IMR-90 (cell line): ENCODE measurements at regions of chr4 and their contacts with region 1.

Region 1: GRCh38 chr4:7987148-7987989 is 47.7 kb upstream of the AFAP1 start:
- DNase-seq: peak; percentile 77
- ATAC-seq: peak; percentile 87
- H3K4me3 ChIP-seq: no peak overlapping the region
- H3K27ac ChIP-seq: no peak overlapping the region
- H3K4me1 ChIP-seq: peaks cover 12% of the 10 kb centered on the region
- H3K27me3 ChIP-seq: peaks cover 5% of the 10 kb centered on the region; the same call in 1 of the 2 replicates
- CTCF ChIP-seq: peak; percentile 95
- POLR2A ChIP-seq: 0 out of 2 replicates have a peak, but pooled peaks have one; percentile 38
- RAD21 ChIP-seq: peak; percentile 97

Region 2: GRCh38 chr4:7192252-7193029 is 794.9 kb before region 1 on chr4 and contains the start of gene SORCS2:
- CTCF ChIA-PET with region 1: no interaction called
- POLR2A ChIA-PET with region 1: no interaction called
- dilution Hi-C with region 1: no loop called
- in situ Hi-C with region 1: no loop called
- intact Hi-C with region 1: loop called (anchors 10 kb)
- DNase-seq: peak; percentile 39
- ATAC-seq: peak; percentile 96
- H3K4me3 ChIP-seq: peak within 1 kb of the TSS; percentile 43
- H3K27ac ChIP-seq: no peak within 1 kb of the TSS
- H3K4me1 ChIP-seq: peaks cover 5% of the 10 kb centered on the region; the same call in 1 of the 2 replicates
- H3K27me3 ChIP-seq: peaks cover 85% of the 10 kb centered on the region
- CTCF ChIP-seq: peak; percentile 85
- POLR2A ChIP-seq: no peak
- RAD21 ChIP-seq: peak; percentile 88
- total RNA-seq, gene SORCS2: 0.28 and 0.36 TPM in 2 replicates

Region 3: DNA sequence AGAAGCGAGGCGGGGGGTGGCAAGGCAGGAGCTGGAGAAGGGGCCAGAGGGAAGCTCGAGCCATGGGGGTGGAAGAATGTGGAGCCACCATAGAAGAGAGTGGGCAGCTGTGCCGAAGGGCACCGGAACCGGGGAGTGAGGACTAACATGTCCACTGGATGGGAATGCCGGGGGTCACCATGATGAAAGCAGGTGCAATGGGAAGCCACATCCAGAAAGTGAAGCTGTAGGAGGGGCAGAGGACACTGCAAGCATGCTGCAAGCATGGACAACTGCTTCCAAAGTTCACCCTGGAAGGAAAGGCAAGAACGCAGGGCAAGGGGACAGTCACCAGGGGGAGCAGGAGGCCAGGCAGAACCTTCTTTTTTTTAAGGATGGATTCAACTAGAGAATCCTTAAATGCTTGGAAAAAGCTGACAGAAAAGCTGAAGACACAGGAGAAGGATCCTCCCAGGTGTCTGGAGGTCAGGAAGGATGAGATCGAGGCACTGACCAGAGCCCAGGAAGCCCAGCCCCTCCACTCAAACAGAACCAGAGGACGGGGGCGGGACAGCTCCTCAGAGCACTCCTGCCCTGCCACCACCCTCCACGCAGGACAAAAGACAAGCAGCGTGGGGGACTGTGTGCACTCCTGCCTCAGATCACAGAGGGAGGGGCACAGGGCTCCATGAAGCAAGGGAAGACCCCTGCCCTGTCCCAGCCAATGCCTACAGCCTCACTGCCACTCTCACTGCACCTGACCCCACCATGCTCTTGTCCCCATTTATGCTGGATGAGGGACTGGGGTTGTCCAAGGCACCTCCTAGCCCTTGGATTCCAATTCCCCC is 216.9 kb before region 1 on chr4:
- CTCF ChIA-PET with region 1: interaction called, 3 read pairs
- POLR2A ChIA-PET with region 1: no interaction called
- dilution Hi-C with region 1: no loop called
- in situ Hi-C with region 1: loop called (anchors 10 kb)
- intact Hi-C with region 1: loop called (anchors 2 kb)
- DNase-seq: peak; percentile 25
- ATAC-seq: peak; percentile 36
- H3K4me3 ChIP-seq: no peak overlapping the region
- H3K27ac ChIP-seq: no peak overlapping the region
- H3K4me1 ChIP-seq: no peaks in the 10 kb centered on the region
- H3K27me3 ChIP-seq: no peaks in the 10 kb centered on the region
- CTCF ChIP-seq: peak; percentile 48
- POLR2A ChIP-seq: no peak
- RAD21 ChIP-seq: peak; percentile 40

Region 4: DNA sequence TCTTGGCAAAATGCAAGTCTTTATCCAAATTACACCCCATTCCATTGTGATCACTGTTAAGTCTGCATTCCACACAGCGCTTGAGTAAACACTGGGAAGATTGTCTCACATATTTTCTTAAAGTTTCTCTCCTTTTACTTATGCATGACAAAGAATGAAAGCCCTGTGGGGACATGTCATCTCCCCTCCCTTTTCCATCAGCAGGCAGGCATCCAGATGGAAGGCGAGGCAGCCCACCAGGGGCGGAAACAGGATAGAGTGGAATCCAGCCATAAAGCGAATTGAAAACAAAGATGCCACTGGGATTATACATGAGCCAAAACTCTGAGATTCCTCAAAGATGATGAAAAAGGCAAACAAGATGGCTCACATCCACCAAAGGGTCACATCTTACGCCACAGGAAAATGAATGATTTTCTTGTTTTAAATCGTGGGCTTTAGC is 125.9 kb before region 1 on chr4:
- CTCF ChIA-PET with region 1: no interaction called
- POLR2A ChIA-PET with region 1: no interaction called
- dilution Hi-C with region 1: no loop called
- in situ Hi-C with region 1: no loop called
- intact Hi-C with region 1: loop called (anchors 5 kb)
- DNase-seq: peak; percentile 97
- ATAC-seq: peak; percentile 68
- H3K4me3 ChIP-seq: no peak overlapping the region
- H3K27ac ChIP-seq: peak overlapping the region; percentile 95
- H3K4me1 ChIP-seq: peaks cover 38% of the 10 kb centered on the region
- H3K27me3 ChIP-seq: no peaks in the 10 kb centered on the region
- CTCF ChIP-seq: no peak
- POLR2A ChIP-seq: no peak
- RAD21 ChIP-seq: peak; percentile 26; the same call in 1 of the 2 replicates

Region 5: GRCh38 chr4:7939377-7940108 is 47.8 kb before region 1 on chr4 and contains the start of gene AFAP1:
- CTCF ChIA-PET with region 1: interaction called, 4 read pairs
- POLR2A ChIA-PET with region 1: no interaction called
- dilution Hi-C with region 1: no loop called
- in situ Hi-C with region 1: no loop called
- intact Hi-C with region 1: loop called (anchors 1 kb)
- DNase-seq: peak; percentile 76
- ATAC-seq: peak; percentile 92
- H3K4me3 ChIP-seq: peak within 1 kb of the TSS; percentile 69
- H3K27ac ChIP-seq: peak within 1 kb of the TSS; percentile 95
- H3K4me1 ChIP-seq: peaks cover 12% of the 10 kb centered on the region
- H3K27me3 ChIP-seq: no peaks in the 10 kb centered on the region
- CTCF ChIP-seq: no peak
- POLR2A ChIP-seq: peak; percentile 90
- RAD21 ChIP-seq: peak; percentile 25; the same call in 1 of the 2 replicates
- total RNA-seq, gene AFAP1: 48.2 and 60.3 TPM in 2 replicates